ENCODE measurements at regions of chr6 and their contacts with region 1.

Region 1: DNA sequence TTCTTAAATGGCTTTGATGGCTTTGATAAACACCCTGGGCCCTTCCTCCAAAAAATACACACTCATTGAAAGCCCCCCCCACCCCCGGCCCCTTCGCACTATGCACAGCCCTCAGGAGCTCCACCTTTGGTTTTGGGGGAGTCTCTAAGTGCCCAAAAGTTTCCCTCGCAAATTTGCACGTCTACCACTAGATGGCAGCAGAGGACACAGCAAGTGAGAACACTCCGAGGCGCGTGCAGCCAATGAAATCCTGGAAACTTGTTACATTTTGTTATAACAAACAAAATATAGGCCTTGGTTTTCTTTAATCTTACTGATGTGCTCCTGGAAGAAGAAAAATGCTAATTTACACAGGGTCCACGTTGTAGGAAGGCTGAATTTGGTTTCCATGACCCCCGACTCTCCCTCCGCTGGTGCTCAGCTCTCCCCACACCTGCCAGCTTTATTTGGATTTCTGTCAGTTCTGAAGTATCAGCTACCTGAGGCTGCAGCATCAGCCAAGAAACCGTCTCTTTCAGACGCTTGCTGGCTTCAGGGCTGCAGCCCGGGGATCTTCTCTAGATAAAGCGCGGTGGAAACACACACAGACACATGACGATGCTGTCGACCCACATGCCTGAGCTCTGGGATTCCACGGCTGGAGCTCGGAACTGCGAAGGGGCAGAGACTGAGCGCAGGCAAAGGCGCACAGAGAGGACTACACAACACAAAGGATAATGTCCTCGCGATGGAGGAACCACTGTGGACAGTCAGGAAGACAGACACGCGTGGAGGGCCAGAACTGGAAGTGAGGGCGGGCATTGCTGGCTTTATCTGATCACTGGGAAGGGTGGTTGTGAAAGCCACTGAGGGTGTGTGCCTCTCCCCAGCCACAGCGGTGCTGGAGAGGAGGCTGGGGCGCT is 148.4 kb upstream of the RPS6KA2 start:
- DNase-seq: peak; percentile 69
- H3K27ac ChIP-seq: no peak overlapping the region
- CTCF ChIP-seq: peak; percentile 89

Region 2: DNA sequence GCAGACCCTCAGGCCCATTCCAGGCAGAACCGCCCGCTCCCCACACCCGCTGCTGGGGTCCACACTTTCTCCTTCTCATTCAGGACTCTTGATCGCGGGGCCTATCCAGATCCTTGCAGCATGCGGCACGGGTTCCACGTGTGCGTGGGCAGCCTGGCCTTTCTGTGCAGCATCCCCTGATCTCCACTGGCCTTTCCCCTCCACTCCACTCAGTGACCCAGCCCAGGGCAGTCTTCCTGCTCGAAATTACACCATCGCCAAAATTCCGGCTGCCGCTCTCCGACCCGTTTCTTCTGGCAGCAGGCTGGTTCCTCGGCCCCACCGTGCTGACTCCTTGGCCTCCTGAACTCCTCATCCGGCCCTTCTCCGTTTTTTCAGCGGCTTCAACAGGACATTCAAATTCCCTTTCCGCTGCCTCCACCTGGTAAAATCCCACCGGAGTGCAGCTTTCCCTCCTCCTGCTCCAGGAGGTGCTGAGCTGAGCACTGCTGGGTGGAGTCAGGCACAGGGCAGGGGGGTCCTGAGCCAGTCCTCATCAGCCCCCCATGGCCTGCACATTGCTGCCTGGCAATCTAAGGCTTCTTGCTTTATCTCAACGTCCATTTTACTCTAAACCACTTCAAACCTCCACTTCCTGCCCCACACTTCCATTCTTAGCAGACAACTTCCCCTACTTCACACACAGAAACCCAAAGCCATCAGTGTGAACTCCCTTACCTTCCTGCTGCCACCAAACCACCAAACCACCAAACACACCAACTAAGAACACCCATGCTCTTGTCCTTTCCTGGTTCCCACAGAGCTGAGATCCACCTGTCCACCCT is 442.0 kb before region 1 on chr6:
- CTCF ChIA-PET with region 1: no interaction called
- POLR2A ChIA-PET with region 1: no interaction called
- DNase-seq: no peak
- H3K27ac ChIP-seq: no peak overlapping the region
- CTCF ChIP-seq: no peak

Region 3: DNA sequence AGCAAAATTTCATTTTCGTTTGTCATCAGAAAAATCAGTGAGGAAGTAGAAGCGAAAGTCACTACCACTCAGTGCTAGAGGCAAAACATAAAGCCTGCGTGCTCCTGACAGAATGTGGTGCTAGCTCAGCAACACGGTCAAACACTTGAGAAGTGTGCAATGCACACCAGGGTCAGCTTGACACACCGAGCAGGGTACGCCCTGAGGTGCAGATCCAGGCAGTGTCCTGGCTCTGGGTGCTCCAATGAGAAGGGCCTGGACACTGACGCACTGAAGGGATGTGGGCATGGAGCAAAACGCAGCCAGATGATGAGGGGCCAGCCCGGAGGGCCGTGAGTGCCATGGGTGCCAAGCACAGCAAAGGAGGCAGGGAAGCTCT is 175.0 kb after region 1 on chr6:
- CTCF ChIA-PET with region 1: interaction called, 12 read pairs
- POLR2A ChIA-PET with region 1: no interaction called
- DNase-seq: no peak
- H3K27ac ChIP-seq: no peak overlapping the region
- CTCF ChIP-seq: no peak

Region 4: DNA sequence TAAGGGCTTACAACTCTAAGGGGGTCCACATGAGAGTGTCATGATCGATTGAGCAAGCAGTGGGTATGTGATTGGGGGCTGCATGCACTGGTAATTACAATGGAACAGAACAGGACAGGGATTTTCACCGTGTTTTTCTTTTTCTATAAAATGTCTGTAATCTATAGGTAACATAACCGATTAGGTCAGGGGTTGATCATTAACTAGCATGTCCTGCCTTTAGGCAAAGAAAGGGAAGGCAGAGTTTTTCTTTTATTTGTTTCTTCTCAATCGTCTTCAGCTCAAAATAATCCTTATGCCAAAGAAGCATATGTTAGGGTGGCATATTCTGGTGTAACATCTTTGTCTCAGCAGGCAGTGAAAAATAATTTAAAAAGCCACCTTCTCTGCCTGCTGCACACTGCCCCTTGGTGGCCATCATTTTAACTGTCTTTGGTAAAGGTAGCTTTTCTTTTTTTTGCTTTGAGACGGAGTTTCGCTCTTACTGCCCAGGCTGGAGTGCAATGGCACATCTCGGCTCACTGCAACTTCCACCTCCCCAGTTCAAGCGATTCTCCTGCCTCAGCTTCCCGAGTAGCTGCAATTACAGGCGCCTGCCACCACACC is 214.1 kb after region 1 on chr6:
- CTCF ChIA-PET with region 1: interaction called, 33 read pairs
- POLR2A ChIA-PET with region 1: no interaction called
- DNase-seq: no peak
- H3K27ac ChIP-seq: no peak overlapping the region
- CTCF ChIP-seq: peak; percentile 34

Region 5: GRCh38 chr6:167141667-167142432 is 366.4 kb after region 1 on chr6:
- CTCF ChIA-PET with region 1: interaction called, 13 read pairs
- POLR2A ChIA-PET with region 1: no interaction called
- DNase-seq: peak; percentile 52
- H3K27ac ChIP-seq: no peak overlapping the region
- CTCF ChIP-seq: peak; percentile 64

Measured in RWPE1 (cell line).